ENCODE measurements at regions of chr10 and their contacts with region 1.

Region 1: DNA sequence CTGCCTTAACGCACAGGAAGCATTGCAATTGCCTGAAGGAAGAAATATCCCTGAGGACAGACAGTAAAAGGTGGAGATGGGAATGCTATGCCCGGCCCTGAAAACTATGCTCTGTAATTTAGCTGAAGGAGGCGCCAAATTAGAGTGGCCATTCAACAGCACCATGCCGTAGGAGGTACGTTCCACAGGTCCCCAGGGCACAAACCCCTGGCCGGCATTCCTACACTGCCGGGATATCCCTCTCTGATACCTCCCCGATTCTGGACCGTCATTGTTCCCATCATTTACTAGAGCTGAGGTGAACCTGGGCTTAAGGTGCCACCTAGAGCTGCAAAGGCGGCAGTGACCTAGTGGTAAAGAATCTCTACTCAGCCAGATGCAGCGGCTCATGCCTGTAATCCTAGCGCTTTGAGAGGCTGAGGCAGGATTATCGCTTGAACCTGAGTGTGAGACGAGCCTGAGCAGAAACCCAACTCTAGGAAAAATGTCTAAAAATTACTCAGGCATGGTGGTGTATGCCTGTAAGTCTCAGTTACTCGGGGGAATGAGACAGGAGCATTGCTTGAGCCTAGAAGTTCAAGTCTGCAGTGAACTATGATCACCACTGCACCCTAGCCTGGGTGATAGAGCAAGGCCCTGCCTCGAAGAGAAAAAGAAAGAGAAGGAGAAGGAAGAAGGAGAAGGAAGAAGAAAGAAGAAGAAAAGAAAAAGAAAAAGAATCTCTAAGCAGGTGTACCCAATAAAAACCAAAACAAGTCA is 53.0 kb upstream of the TNKS2 start:
- DNase-seq: no peak
- ATAC-seq: peak; percentile 40 to 74 (median 72)
- H3K4me3 ChIP-seq: no peak overlapping the region
- H3K27ac ChIP-seq: no peak overlapping the region
- H3K4me1 ChIP-seq: no peaks in the 10 kb centered on the region
- H3K27me3 ChIP-seq: peaks cover 0 to 5% (median 4%) of the 10 kb centered on the region in 3 donors
- CTCF ChIP-seq: peak; percentile 45

Region 2: GRCh38 chr10:91493313-91493712 is 251.9 kb before region 1 on chr10:
- intact Hi-C with region 1: loop called in 1 of 2 experiments (anchors 10 kb)
- DNase-seq: no peak
- ATAC-seq: peak in 2 of 4 donors; percentile 67 to 78
- H3K4me3 ChIP-seq: no peak overlapping the region
- H3K27ac ChIP-seq: no peak overlapping the region
- H3K4me1 ChIP-seq: peaks cover 15% of the 10 kb centered on the region
- H3K27me3 ChIP-seq: no peaks in the 10 kb centered on the region
- CTCF ChIP-seq: peak; percentile 58

Region 3: DNA sequence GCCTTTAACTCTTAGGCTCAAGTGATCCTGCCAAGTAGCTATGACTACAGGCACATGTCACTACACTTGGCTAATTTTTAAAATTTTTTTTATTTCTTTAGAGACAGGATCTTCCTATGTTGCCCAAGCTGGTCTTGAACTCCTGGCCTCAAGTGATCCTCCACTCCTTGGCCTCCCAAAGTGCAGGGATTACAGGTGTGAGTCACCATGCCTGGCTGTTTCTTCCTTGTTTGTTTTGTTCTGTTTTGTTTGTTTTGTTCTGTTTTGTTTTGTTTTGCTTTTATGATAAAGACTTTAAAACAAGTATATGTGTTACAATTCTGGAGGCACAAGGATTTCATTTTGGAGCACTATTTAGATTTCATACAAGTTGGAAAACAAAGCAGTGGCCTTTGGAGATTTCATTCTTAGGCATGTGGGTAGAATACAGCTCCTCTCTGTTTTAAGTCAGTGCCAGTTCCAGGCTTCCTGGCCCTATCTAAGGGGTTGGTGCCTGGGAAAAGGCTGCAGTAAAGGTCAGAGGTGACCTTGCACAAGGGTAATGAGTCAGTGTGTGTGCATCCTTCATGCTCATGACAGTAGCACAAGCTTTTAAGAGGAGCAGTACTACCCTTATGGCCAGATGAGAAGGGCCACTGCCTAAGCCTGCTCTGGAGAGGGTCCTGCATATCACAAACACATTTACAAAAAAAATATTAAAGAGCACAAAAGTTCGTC is 146.2 kb after region 1 on chr10:
- intact Hi-C with region 1: loop called in 1 of 2 experiments (anchors 10 kb)
- DNase-seq: no peak
- ATAC-seq: no peak
- H3K4me3 ChIP-seq: no peak overlapping the region
- H3K27ac ChIP-seq: no peak overlapping the region
- H3K4me1 ChIP-seq: peaks cover 6% of the 10 kb centered on the region
- H3K27me3 ChIP-seq: no peaks in the 10 kb centered on the region
- CTCF ChIP-seq: no peak